ENCODE measurements at regions of chr2 and their contacts with region 1.

Region 1: GRCh38 chr2:110853507-110853906 is 121.1 kb downstream of the ACOXL start:
- DNase-seq: peak; percentile 43
- H3K4me3 Mint-ChIP-seq: no peak overlapping the region
- H3K27ac Mint-ChIP-seq: peak overlapping the region; percentile 81
- H3K4me1 Mint-ChIP-seq: peaks cover 86% of the 10 kb centered on the region
- H3K27me3 Mint-ChIP-seq: peaks cover 2% of the 10 kb centered on the region

Region 2: DNA sequence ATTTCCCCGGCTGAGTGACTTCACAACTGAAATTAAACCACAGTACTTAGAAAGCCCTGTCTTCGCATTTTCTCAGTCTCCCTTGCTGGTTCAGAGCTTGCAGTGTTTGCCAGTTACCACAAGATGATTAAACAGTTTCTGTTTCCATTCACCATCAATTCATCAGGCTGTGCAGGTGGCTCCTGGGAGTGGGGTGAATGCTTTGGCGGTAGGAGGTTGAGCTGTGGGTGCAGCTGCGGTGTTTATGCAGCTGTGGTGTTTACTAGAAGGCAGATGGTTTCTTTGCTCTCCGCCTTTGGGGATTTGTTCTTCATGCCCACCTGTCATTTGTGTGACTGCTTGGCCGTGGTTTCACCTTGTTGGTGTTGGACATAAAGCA is 105.0 kb before region 1 on chr2:
- intact Hi-C with region 1: loop called (anchors 5 kb)
- DNase-seq: peak; percentile 81
- H3K4me3 Mint-ChIP-seq: peak overlapping the region; percentile 67
- H3K27ac Mint-ChIP-seq: peak overlapping the region; percentile 52
- H3K4me1 Mint-ChIP-seq: peaks cover 55% of the 10 kb centered on the region
- H3K27me3 Mint-ChIP-seq: peaks cover 15% of the 10 kb centered on the region

Region 3: DNA sequence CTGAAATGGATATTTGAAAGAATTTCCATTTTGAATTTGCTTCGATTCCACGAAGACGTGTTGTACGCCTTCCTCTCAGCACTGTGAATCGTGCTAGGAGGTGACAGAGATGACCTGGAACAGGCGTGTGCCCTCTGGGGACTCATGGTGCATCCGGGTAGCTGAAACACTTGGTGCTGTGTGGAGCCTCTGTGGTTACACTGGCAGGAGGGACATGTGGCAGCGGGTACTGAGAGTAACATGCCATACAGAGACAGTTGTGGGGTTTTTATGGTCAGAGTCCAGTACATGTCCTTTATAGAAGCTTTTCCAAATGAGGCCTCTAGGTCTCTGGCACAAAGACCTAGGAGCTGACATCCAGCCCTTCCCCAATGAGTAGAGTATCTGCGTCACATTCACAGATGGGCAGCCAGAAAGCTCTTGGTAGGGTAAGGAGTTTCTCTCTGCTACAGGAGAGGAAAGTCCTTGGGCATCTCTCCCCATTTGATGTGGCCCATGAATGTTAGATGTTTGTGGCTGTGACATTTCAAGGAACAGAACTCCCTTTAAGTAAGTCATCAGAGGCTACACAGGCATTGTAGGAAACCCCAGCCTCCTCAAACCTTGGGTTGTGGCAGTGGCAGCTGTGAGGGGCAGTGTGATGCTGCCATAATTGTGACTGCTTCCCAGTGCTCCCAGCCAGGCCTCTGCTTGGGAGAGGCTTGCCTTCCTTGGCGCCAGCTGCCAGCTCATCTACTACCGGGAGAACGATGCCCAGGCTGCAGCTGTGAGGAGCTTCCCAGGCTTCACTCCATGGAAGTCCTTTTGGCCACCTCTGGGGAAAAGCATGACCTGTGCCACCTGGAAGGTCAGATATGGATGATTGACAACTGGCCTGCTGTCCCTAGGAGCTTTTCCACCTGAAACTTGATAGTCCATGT is 40.5 kb before region 1 on chr2:
- intact Hi-C with region 1: loop called (anchors 2 kb)
- DNase-seq: no peak
- H3K4me3 Mint-ChIP-seq: no peak overlapping the region
- H3K27ac Mint-ChIP-seq: no peak overlapping the region
- H3K4me1 Mint-ChIP-seq: peaks cover 24% of the 10 kb centered on the region
- H3K27me3 Mint-ChIP-seq: peaks cover 14% of the 10 kb centered on the region

Region 4: GRCh38 chr2:110881908-110882307 is 28.4 kb after region 1 on chr2:
- intact Hi-C with region 1: loop called (anchors 1 kb)
- DNase-seq: no peak
- H3K4me3 Mint-ChIP-seq: no peak overlapping the region
- H3K27ac Mint-ChIP-seq: no peak overlapping the region
- H3K4me1 Mint-ChIP-seq: peaks cover 13% of the 10 kb centered on the region
- H3K27me3 Mint-ChIP-seq: peaks cover 46% of the 10 kb centered on the region

Region 5: GRCh38 chr2:111705711-111706336 is 852.3 kb after region 1 on chr2:
- intact Hi-C with region 1: loop called (anchors 5 kb)
- DNase-seq: peak; percentile 41
- H3K4me3 Mint-ChIP-seq: no peak overlapping the region
- H3K27ac Mint-ChIP-seq: peak overlapping the region; percentile 80
- H3K4me1 Mint-ChIP-seq: peaks cover 52% of the 10 kb centered on the region
- H3K27me3 Mint-ChIP-seq: peaks cover 11% of the 10 kb centered on the region